ENCODE measurements at regions of chr9 and their contacts with region 1.

Region 1: GRCh38 chr9:128937310-128938165 is 9.9 kb downstream of the DOLK start:
- DNase-seq: no peak
- CTCF ChIP-seq: no peak

Region 2: DNA sequence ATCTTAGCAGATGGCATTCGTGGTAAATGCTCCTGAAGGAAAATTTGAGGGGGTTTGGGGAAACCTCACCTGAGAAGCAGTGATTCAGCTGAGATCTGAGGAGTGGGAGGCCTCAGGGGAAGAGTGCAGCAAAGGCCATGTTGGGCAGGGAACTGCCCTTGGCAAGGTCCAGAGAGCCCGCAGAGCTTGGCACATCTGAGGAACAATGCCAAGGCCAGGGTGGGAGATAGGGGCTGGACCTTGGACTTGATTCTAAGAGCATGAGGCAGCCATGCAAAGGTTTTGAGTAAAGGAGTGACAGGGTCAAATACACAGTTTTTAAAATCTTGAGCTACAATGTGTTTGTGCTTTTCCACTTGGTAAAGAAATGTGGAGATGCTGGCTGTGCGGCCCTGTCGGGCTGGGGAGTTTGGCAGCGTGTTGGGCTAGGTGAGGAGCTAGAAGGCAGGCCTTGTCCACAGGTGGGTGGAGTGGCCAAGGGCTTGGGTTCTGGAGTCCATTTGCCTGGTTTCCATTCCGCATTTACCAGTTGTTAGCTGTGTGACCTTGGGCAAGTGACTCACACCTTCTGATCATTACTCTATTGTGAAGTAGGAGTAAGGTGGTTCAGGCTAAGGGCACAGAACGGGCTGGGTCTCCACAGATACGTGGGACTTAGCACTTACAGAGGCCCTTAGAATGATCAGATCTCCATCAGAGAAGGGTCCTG is 144.4 kb before region 1 on chr9:
- in situ Hi-C with region 1: no loop called
- DNase-seq: no peak
- CTCF ChIP-seq: no peak

Region 3: DNA sequence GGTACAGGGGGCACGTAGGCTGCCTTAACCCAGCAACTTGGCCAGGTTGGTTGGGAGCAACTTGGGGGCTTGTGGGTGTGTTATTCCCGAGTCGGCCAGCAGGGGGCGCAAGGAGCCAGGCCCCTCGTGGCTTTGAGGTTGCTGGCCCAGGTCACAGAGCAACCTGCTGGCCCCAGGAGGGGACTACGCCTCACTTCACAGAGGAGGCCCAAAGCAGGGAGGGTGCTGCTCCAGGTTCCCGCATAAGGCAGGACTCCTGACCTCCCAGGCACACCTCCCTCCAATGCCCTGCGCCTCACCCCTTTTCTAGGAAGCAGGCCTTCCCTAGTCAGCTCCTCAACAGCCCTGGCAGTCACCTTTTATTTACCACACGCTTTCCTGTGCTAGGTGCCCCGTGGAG is 73.9 kb before region 1 on chr9:
- in situ Hi-C with region 1: loop called (anchors 5 kb)
- DNase-seq: peak; percentile 84
- CTCF ChIP-seq: peak; percentile 93

Region 4: DNA sequence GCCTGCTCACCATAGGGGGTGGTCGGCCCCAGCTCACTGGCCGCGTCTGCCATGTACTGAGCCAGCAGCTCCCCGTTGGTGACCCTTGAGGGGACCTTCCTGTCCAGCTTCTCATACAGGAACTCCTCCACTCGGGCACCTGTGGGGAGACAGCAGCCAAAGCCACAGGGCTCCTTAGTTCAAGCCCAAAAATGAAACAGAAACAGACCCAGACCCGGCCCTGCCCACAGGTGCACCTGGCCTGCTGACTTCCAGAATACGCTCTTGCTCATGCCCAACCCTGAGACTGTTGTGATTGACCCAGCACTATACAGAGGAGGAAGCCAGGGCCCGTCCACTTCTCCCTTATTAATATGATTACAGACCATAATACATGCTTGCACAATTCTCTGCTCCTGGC is 83.5 kb after region 1 on chr9:
- in situ Hi-C with region 1: no loop called
- DNase-seq: peak; percentile 70
- CTCF ChIP-seq: no peak

Measured in GM13977 (cell line).